Psoas muscle (tissue), 8 donors: ENCODE measurements at regions of chr10 and their contacts with region 1.

Region 1: GRCh38 chr10:89591111-89591795 is 53.8 kb downstream of the PANK1 start:
- DNase-seq: peak; percentile 19 to 57
- ATAC-seq: peak; percentile 70 to 83 (median 78)
- H3K4me3 ChIP-seq: no peak overlapping the region
- H3K27ac ChIP-seq: peak overlapping the region; percentile 72
- H3K4me1 ChIP-seq: peaks cover 29% of the 10 kb centered on the region
- H3K27me3 ChIP-seq: no peaks in the 10 kb centered on the region
- CTCF ChIP-seq: no peak

Region 2: DNA sequence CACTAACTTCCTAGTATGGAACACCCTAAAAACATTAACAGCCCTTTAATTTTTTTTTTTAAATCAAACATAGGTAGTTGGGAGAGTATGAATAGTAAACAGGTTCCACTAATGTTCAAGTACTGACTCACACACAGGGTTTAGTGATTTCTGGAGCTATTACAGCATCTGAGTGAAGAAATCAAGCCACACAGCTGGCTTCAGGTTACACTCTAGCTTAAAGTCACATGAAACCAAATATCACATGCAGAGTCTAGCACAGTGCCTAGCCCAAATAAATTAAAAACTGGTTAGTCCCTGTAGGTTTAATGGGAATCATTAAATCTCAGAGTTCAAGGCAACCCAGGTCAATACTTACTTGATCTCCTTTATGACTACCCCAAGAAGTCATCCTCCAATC is 42.2 kb after region 1 on chr10:
- intact Hi-C with region 1: loop called (anchors 5 kb)
- DNase-seq: no peak
- ATAC-seq: peak; percentile 96 to 98 (median 97)
- H3K4me3 ChIP-seq: peak overlapping the region; percentile 37
- H3K27ac ChIP-seq: peak overlapping the region; percentile 87
- H3K4me1 ChIP-seq: peaks cover 40% of the 10 kb centered on the region
- H3K27me3 ChIP-seq: no peaks in the 10 kb centered on the region
- CTCF ChIP-seq: no peak

Region 3: GRCh38 chr10:91340613-91341362 is 1749.5 kb after region 1 on chr10:
- intact Hi-C with region 1: no loop called
- DNase-seq: peak; percentile 71 to 84
- ATAC-seq: peak; percentile 95 to 98 (median 96)
- H3K4me3 ChIP-seq: peak overlapping the region; percentile 6
- H3K27ac ChIP-seq: peak overlapping the region; percentile 86
- H3K4me1 ChIP-seq: peaks cover 33% of the 10 kb centered on the region
- H3K27me3 ChIP-seq: no peaks in the 10 kb centered on the region
- CTCF ChIP-seq: no peak